PC-9 (cell line): ENCODE measurements at regions of chr3 and their contacts with region 1.

Region 1: DNA sequence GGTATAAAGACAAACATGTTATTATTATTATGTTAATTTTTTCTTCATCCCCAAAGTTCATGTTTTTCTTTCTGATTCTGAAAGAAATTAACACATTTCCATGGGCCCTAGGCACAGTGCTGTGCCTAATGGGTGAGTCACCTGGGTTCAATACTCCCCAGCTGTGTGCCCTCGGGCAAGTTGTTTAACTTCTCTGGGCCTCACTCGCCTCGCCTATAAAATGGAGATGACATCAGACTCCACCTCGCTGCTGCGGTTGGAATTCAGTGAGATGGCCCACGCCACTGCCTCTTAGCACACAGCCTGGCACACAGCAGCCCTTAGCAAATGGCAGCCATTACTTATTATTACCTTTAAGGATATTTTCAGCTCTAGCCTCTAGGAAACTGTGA is 22.6 kb downstream of the DNASE1L3 start:
- DNase-seq: peak in 1 of 2 experiments; percentile 60
- H3K4me3 ChIP-seq: no peak overlapping the region
- H3K27ac ChIP-seq: no peak overlapping the region
- H3K4me1 ChIP-seq: peaks cover 15% of the 10 kb centered on the region; the same call in 1 of the 2 replicates
- H3K27me3 ChIP-seq: no peaks in the 10 kb centered on the region
- CTCF ChIP-seq: no peak

Region 2: GRCh38 chr3:58217209-58217811 is 29.1 kb after region 1 on chr3:
- CTCF ChIA-PET with region 1: interaction called, 7 read pairs
- POLR2A ChIA-PET with region 1: no interaction called
- intact Hi-C with region 1: loop called (anchors 1 kb)
- DNase-seq: peak; percentile 75 to 79
- H3K4me3 ChIP-seq: 0 out of 2 replicates have a peak overlapping the region, but pooled peaks have one; percentile 24
- H3K27ac ChIP-seq: 0 out of 2 replicates have a peak overlapping the region, but pooled peaks have one; percentile 33
- H3K4me1 ChIP-seq: peaks cover 48% of the 10 kb centered on the region
- H3K27me3 ChIP-seq: no peaks in the 10 kb centered on the region
- CTCF ChIP-seq: peak; percentile 84

Region 3: DNA sequence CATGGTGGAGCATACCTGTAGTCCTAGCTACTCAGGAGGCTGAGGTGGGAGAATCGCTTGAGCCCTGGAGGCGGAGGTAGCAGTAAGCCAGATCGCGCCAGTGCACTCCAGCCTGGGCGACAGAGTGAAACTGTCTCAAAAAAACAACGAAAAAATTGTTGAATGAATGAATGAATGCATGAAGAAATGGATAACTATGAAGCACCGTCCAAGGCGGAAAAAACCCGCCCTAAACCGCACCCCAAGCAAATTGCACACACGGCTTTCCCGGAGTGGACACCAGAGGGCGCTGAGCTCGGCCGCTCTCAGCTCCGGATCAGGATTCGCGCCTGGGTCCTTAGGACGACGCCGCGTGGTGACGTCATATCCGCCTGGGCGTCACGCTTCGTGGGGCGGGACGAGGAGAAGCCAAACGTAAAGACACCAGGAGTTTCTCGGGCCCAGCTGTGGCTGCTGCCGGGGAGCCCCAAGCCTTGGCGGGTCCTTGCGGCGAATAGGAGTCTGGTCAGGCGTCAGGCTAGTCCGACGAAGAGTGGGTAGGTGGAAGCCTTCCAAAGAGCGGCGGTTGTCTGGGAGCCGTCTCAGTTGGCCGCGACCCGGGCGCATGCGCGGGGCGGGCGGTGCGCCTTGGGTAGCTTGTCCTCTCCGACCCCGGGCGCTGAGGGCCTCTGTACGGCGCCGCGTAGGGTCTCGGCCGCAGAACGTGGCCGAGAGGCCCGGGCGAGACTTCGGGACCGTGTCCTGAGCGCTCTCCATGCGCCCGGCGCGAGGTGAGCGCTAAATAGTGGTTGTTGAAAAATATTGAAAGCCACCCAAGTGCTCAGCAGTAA is 117.9 kb after region 1 on chr3 and contains the starts of genes HTD2 and RPP14:
- CTCF ChIA-PET with region 1: interaction called, 16 read pairs
- POLR2A ChIA-PET with region 1: no interaction called
- intact Hi-C with region 1: no loop called
- DNase-seq: peak; percentile 86 to 95
- H3K4me3 ChIP-seq: peak within 1 kb of the TSS; percentile 91
- H3K27ac ChIP-seq: peak within 1 kb of the TSS; percentile 79
- H3K4me1 ChIP-seq: peaks cover 12% of the 10 kb centered on the region
- H3K27me3 ChIP-seq: no peaks in the 10 kb centered on the region
- CTCF ChIP-seq: peak; percentile 85
- total RNA-seq, gene HTD2: 6.2 and 7.4 TPM in 2 replicates
- total RNA-seq, gene RPP14: 13.2 and 13.8 TPM in 2 replicates

Region 4: DNA sequence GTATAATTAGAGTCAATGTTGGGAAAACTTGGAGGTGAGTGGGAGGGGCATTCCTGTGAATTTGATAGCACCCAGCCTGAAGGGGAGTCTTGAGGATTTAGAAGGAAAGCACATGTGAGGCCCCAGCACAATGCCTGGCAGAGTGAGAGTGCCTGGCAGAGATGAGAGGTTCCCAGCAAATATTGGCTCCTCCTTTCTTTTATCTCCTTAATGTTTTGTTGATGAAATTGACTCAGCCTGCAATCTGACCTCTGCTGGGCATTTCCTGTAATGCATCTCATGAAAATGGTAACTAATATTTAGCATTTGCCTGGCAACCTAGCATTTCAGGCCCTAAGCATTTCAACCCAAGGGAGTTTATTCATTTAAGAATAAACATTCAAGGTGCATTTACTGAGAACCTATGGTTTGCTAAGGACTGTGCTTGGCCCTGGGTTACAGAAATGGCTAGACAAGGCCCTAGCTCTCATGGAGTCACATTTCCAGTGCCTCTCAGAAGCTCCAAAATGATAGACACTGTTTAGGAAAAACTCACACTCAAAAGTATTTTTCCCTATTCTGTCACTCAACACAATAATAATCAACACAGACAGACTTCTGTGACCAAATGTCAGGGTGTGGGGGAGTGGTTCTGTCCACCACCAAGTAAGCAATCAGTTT is 226.5 kb after region 1 on chr3:
- CTCF ChIA-PET with region 1: interaction called, 3 read pairs
- POLR2A ChIA-PET with region 1: no interaction called
- intact Hi-C with region 1: loop called (anchors 5 kb)
- DNase-seq: peak; percentile 34 to 50
- H3K4me3 ChIP-seq: no peak overlapping the region
- H3K27ac ChIP-seq: no peak overlapping the region
- H3K4me1 ChIP-seq: peaks cover 5% of the 10 kb centered on the region; the same call in 1 of the 2 replicates
- H3K27me3 ChIP-seq: no peaks in the 10 kb centered on the region
- CTCF ChIP-seq: peak; percentile 82

Region 5: GRCh38 chr3:58630076-58630709 is 442.0 kb after region 1 on chr3:
- CTCF ChIA-PET with region 1: interaction called, 5 read pairs
- POLR2A ChIA-PET with region 1: no interaction called
- intact Hi-C with region 1: loop called (anchors 10 kb)
- DNase-seq: peak; percentile 40 to 61
- H3K4me3 ChIP-seq: no peak overlapping the region
- H3K27ac ChIP-seq: no peak overlapping the region
- H3K4me1 ChIP-seq: peaks cover 8% of the 10 kb centered on the region; the same call in 1 of the 2 replicates
- H3K27me3 ChIP-seq: no peaks in the 10 kb centered on the region
- CTCF ChIP-seq: peak; percentile 96